ENCODE measurements at regions of chr10 and their contacts with region 1.

Region 1: DNA sequence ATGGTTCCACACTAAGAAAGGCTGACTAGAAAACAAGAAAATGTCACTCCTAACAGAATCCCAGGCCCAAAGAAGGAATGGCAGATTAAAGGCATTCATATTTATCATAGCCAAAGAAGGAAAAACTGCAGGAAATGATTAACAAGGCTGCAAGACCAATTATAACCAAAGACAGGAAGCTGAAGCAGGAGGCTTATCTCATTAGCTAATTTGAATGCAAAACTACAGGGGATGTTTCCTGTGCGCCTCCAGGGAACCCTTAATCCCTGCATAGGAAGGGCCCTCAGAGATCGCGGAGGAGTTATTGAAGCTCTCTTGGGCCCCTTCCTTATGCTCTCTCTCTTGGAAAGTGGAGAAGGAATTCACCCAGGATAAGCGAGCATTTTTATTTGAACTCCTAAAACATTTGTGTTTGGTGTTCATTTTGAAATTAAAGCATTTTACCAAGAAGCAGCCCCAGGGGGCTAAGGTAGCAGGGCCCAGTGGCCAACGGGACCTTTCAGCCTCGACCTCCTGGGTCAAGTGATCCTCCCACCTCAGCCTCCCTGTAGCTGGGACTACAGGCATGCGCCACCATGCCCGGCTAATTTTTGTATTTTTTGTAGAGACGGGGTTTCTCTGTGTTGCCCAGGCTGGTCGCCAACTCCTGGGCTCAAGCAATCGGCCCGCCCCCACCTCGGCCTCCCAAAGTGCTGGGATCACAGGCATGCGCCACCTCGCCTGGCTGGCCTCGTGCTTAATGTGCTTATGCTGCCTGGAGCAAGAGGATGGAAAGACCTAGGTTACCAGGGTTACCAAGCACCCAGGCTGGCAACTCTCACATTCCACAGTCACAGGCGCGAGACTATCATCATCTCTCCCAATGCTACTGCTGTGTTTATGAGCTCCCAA is 24.1 kb upstream of the PROSER2 start:
- DNase-seq: no peak

Region 2: DNA sequence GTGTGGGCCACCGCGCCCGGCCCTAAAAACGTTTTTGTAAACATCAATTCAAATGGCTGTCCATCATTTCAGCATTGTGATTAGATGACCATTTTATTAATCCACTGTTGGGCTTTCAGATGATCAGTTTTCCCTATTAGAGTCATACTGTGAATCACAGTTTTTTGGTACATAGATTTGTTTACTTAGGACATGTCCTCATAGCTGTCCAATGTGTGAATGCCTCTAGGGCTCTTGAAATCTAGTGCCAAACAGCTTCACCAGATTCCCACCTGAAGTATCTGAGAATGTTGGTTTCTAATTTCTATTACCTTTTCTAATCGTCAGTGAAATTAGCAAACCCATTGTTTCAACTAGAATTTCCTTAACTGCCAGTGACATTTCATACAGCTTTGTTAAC is 176.7 kb after region 1 on chr10:
- CTCF ChIA-PET with region 1: interaction called, 12 read pairs
- POLR2A ChIA-PET with region 1: no interaction called
- DNase-seq: no peak

Measured in HEK293T (cell line).